Left cardiac atrium (tissue), 4 donors: ENCODE measurements at regions of chr14 and their contacts with region 1.

Region 1: DNA sequence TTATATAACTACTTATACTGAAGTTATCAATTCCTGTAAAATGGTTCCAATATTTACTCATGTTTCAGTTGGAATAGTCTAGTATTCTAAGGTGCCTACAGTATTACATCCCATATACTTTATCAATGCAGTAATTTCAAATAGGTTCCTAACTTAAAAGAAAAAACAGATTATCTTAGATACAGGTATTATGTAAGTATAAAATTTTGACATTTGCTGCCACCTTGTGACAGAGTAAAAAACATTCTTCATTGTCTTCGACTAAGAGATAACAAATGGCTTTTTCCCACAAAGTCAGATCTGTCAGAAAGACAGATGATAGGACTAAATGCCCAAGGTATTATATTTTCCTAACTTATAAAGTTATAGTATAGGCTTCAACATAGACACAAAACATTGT is 78.7 kb downstream of the TXNDC16 start:
- DNase-seq: no peak
- ATAC-seq: no peak

Region 2: DNA sequence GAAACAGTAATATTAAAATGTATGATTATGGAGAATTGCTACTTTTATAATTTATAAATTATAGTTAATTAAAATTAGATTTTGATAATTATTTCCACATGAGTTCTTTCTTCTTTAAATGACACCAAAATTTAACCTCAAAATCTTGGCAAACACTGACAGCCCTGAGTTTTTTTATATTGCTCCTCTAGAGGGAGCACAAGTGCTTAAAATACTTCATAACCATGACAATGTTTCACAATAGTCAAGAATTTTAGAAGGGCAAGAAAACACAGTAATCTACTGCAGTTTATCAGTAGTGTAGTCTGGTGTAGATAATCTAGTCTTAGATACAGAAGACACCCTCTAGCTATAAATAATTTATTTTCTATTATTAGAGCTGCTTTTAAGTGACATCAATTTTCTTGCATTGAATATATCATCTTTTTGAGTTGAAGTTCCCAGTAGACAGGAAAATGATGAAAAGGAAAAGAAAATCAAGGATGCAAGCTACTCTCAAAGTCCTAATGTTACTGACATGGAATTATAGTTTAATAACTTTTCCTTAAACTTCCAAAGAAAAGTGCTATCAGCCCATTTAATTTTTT is 173.8 kb before region 1 on chr14:
- intact Hi-C with region 1: loop called in 1 of 2 experiments (anchors 5 kb)
- DNase-seq: no peak
- ATAC-seq: peak; percentile 55 to 63

Region 3: DNA sequence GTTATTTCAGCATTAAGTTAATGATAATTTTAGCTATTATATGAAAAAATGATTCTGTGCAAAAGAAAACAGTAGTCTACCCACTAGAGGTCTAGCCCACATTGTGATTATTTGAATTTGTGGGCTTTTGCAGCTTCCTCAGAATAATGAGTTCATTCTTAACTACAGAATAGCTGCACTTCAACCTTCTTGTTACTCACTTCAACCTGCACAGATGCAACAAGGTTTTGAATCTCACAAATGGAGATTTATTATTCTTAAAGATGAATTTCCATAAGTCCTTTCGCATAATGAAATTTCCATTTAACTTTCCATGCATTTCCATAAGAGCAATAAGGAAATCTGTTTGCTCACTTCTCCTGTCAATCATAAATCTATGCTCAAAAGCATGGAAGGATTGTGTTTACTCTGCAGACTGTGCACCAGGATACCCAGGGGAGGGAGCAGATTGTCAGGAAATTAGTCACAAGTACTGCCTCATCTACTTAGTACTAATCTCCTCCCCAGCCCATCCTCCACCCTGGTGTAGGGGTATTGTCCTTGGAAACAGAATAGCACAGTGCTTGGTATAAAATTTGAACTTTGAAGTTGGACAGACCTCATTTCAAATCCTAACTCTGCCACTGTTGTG is 135.4 kb before region 1 on chr14:
- intact Hi-C with region 1: no loop called
- DNase-seq: no peak
- ATAC-seq: no peak

Region 4: GRCh38 chr14:54356172-54356571 is 1882.6 kb after region 1 on chr14:
- intact Hi-C with region 1: no loop called
- DNase-seq: no peak
- ATAC-seq: no peak